Activated T-helper 1 cell treated with anti-CD3 and anti-CD28 coated beads, Interleukin-12 subunit alpha, Interleukin-12 subunit beta, Interleukin-2, Interleukin-4 antibody, amounts not matched to agents 30 ng/mL and 10 ng/mL and 1 ng/mL, durations not matched to agents 14 hours and 24 hours and 36 hours (primary cell): ENCODE measurements at regions of chr2 and their contacts with region 1.

Region 1: DNA sequence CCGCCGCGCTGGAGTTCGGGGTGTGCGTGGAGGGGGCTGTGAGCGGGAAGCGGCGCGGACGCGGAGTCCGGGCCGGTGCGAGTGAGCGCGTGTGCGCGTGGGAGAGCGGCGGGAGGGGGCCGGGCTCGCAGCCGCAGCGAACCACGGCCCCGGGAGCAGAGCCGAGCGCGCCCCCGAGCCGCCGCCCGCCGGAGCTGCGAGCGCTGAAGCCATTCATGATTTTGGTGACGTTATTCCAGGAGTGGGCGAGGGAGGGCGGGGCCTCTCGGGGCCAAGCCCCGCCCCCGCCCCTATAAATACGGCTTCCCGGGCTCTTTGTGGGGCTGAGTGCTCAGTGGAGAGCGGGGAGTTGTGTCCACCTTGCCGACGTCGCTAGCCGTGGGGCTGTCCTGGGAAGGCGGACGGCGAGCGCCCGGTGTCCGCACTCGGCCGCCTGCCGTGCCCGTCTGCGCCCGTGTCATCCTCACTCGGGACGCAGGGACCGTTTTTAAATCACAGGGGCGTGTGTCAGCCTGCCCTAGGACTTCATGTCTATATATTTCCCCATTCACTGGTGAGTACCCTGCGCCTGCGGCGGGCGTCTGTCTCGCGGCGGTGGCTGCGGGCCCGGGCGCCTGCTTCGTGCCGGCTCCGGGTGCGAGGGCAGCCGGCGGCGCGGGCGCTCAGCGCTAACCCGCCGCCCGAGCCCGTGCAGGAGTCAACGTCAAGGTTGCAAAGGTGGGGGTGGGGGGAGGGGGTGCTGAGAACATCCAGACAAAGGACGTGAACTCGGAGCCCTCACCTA is at the start of gene LBH:
- DNase-seq: peak; percentile 74
- H3K4me3 Mint-ChIP-seq: peak within 1 kb of the TSS; percentile 98
- H3K27ac Mint-ChIP-seq: peak within 1 kb of the TSS; percentile 99
- H3K4me1 Mint-ChIP-seq: peaks cover 72% of the 10 kb centered on the region
- H3K27me3 Mint-ChIP-seq: peaks cover 7% of the 10 kb centered on the region
- total RNA-seq, gene LBH: 306 and 313 TPM in 2 replicates

Region 2: GRCh38 chr2:28894470-28895177 is 1336.8 kb before region 1 on chr2 and contains the start of gene WDR43:
- intact Hi-C with region 1: loop called (anchors 10 kb)
- DNase-seq: peak; percentile 99
- H3K4me3 Mint-ChIP-seq: peak within 1 kb of the TSS; percentile 100
- H3K27ac Mint-ChIP-seq: peak within 1 kb of the TSS; percentile 96
- H3K4me1 Mint-ChIP-seq: peaks cover 40% of the 10 kb centered on the region
- H3K27me3 Mint-ChIP-seq: no peaks in the 10 kb centered on the region
- total RNA-seq, gene WDR43: 188 and 190 TPM in 2 replicates

Region 3: GRCh38 chr2:30165050-30165520 is 66.3 kb before region 1 on chr2:
- intact Hi-C with region 1: loop called (anchors 2 kb)
- DNase-seq: peak; percentile 62
- H3K4me3 Mint-ChIP-seq: no peak overlapping the region
- H3K27ac Mint-ChIP-seq: no peak overlapping the region
- H3K4me1 Mint-ChIP-seq: peaks cover 5% of the 10 kb centered on the region
- H3K27me3 Mint-ChIP-seq: peaks cover 3% of the 10 kb centered on the region

Region 4: GRCh38 chr2:30208452-30208851 is 23.0 kb before region 1 on chr2:
- intact Hi-C with region 1: loop called (anchors 2 kb)
- DNase-seq: no peak
- H3K4me3 Mint-ChIP-seq: no peak overlapping the region
- H3K27ac Mint-ChIP-seq: no peak overlapping the region
- H3K4me1 Mint-ChIP-seq: peaks cover 22% of the 10 kb centered on the region
- H3K27me3 Mint-ChIP-seq: peaks cover 6% of the 10 kb centered on the region

Region 5: DNA sequence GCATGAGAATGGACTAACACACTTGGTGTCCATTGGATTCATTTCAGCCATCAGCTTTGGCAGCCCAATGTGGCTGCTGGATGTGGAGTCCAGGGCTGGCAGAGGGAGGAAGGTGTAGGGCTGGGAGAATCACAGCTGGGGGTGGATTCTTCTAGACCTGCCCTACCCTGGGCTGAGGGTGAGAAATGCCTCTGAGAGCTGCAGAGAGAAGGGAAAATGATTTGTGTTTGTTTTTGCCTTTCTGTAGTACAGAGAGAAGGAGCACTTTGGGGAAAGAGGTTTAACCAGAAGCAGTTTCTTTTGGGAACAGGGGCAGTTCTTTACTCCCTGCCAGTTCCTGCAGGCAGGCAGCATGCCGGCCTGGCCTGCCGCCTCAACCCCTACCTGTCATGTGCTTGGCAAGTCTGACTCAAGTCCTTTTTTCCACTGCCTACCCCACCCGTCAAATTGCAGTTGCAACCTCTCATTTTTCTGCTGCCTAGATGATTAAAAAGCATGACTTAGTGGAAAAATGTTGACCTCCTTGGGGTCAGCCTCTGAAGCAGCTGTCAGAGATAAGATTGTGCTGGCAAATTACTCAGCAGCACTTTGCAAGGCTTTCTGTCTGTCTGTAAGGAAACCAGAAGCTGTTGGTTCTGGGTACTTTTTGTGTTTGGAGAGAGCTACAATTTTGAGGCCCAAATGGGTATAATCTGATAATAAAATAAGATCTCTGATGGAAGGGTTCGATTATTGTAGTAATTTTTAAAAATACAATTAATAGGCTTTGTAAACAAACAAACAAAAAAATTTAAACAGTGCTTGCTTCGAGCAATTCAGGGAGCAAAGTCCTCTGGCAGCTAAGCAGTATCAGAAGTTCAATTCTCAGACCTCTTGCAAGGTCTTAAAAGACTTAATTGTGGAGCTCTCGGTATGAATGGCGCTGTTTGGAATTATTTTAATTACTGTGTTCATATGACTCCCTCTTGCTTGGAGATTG is 21.6 kb after region 1 on chr2:
- intact Hi-C with region 1: loop called (anchors 1 kb)
- DNase-seq: peak; percentile 48
- H3K4me3 Mint-ChIP-seq: peak overlapping the region; percentile 53
- H3K27ac Mint-ChIP-seq: peak overlapping the region; percentile 93
- H3K4me1 Mint-ChIP-seq: peaks cover 92% of the 10 kb centered on the region
- H3K27me3 Mint-ChIP-seq: no peaks in the 10 kb centered on the region

Region 6: GRCh38 chr2:30273261-30273861 is 42.0 kb after region 1 on chr2:
- intact Hi-C with region 1: loop called (anchors 1 kb)
- DNase-seq: no peak
- H3K4me3 Mint-ChIP-seq: peak overlapping the region; percentile 56
- H3K27ac Mint-ChIP-seq: peak overlapping the region; percentile 97
- H3K4me1 Mint-ChIP-seq: peaks cover 71% of the 10 kb centered on the region
- H3K27me3 Mint-ChIP-seq: peaks cover 4% of the 10 kb centered on the region

Region 7: DNA sequence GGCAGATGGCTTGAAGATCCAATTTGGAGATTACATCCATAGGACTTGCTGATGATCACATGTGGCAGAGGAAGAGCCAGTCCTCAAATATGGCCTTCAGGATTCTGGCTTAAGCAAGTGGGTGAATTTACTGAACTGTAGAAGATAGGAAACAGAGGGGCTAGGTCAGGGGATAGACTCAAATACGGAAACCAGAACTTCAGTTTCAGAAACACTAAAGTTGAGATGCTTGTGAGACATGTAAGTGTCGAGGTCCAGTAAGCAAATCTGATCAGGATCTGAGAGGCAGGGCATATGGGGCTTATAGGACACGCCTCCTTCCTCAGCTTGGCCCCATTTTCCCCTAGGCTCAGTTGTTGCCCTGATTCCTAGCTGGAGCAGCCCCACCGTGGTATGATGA is 107.7 kb after region 1 on chr2:
- intact Hi-C with region 1: no loop called
- DNase-seq: no peak
- H3K4me3 Mint-ChIP-seq: no peak overlapping the region
- H3K27ac Mint-ChIP-seq: peak overlapping the region; percentile 94
- H3K4me1 Mint-ChIP-seq: peaks cover 63% of the 10 kb centered on the region
- H3K27me3 Mint-ChIP-seq: no peaks in the 10 kb centered on the region

Region 8: DNA sequence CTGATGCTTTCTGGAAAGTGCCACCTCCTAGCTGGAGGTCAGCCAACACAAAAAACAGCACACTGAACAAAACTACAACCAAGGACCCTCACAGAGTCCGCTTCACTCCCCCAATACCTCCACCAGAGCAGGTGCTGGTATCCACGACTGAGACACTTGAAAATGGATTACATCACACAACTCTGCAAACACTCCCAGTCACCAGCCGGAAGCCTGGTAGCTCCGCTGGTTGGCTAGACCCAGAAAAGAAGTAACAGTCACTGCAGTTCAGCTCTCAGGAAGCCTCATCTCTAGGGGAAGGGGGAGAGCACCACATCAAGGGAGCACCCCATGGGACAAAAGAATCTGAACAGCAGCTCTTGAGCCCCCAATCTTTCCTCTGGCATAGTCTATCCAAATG is 391.0 kb after region 1 on chr2:
- intact Hi-C with region 1: no loop called
- DNase-seq: no peak
- H3K4me3 Mint-ChIP-seq: no peak overlapping the region
- H3K27ac Mint-ChIP-seq: no peak overlapping the region
- H3K4me1 Mint-ChIP-seq: peaks cover 22% of the 10 kb centered on the region
- H3K27me3 Mint-ChIP-seq: no peaks in the 10 kb centered on the region

Region 9: GRCh38 chr2:30641765-30642345 is 410.5 kb after region 1 on chr2:
- intact Hi-C with region 1: no loop called
- DNase-seq: no peak
- H3K4me3 Mint-ChIP-seq: no peak overlapping the region
- H3K27ac Mint-ChIP-seq: no peak overlapping the region
- H3K4me1 Mint-ChIP-seq: no peaks in the 10 kb centered on the region
- H3K27me3 Mint-ChIP-seq: no peaks in the 10 kb centered on the region